Activated naive CD4-positive, alpha-beta T cell treated with anti-CD3 and anti-CD28 coated beads for 36 hours (primary cell): ENCODE measurements at regions of chr4 and their contacts with region 1.

Region 1: DNA sequence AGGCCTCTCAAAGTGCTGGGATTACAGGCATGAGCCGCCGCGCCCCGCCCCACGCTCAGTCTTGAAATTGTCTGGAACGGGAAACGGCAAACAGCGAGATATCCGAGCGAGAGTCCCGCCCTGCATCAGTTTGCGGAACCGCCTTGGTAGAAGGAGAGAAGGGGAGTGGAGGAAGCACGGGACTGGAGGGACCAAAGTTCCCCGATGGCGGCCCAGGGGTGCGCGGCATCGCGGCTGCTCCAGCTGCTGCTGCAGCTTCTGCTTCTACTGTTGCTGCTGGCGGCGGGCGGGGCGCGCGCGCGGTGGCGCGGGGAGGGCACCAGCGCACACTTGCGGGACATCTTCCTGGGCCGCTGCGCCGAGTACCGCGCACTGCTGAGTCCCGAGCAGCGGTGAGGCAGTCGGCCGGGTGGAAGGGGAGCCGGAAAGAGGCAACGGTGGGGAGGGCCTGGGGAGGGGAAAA is at the start of gene BST1:
- DNase-seq: peak; percentile 80
- H3K4me3 Mint-ChIP-seq: peak within 1 kb of the TSS; percentile 82
- H3K27ac Mint-ChIP-seq: no peak within 1 kb of the TSS
- H3K4me1 Mint-ChIP-seq: peaks cover 12% of the 10 kb centered on the region
- H3K27me3 Mint-ChIP-seq: peaks cover 15% of the 10 kb centered on the region
- total RNA-seq, gene BST1: 0.74 to 0.96 TPM

Region 2: DNA sequence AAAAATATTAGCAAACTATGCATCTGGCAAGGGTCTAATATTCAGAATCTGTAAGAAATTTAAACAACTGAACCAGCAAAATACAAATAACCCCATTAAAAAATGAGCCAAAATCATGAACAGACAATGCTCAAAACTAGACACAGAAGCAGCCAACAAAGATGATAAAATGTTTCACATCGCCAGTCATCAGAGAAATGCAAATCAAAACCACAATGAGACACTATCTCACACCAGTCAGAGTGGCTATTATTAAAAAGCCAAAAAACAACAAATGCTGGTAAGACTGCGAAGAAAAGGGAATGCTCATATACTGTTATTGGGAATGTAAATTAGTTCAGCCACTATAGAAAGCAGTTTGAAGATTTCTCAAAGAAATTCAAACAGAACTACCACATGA is 902.0 kb before region 1 on chr4:
- CTCF ChIA-PET with region 1: no interaction called
- intact Hi-C with region 1: no loop called
- DNase-seq: no peak
- H3K4me3 Mint-ChIP-seq: no peak overlapping the region
- H3K27ac Mint-ChIP-seq: no peak overlapping the region
- H3K4me1 Mint-ChIP-seq: no peaks in the 10 kb centered on the region
- H3K27me3 Mint-ChIP-seq: peaks cover 26% of the 10 kb centered on the region

Region 3: GRCh38 chr4:15681207-15682015 is 21.6 kb before region 1 on chr4 and contains the start of gene FAM200B:
- CTCF ChIA-PET with region 1: no interaction called
- intact Hi-C with region 1: loop called (anchors 1 kb)
- DNase-seq: peak; percentile 99
- H3K4me3 Mint-ChIP-seq: peak within 1 kb of the TSS; percentile 90
- H3K27ac Mint-ChIP-seq: peak within 1 kb of the TSS; percentile 89
- H3K4me1 Mint-ChIP-seq: peaks cover 39% of the 10 kb centered on the region
- H3K27me3 Mint-ChIP-seq: peaks cover 3% of the 10 kb centered on the region
- total RNA-seq, gene FAM200B: 8.0 to 9.1 TPM

Region 4: GRCh38 chr4:15719506-15719905 is 16.5 kb after region 1 on chr4:
- CTCF ChIA-PET with region 1: no interaction called
- intact Hi-C with region 1: no loop called
- DNase-seq: no peak
- H3K4me3 Mint-ChIP-seq: no peak overlapping the region
- H3K27ac Mint-ChIP-seq: no peak overlapping the region
- H3K4me1 Mint-ChIP-seq: no peaks in the 10 kb centered on the region
- H3K27me3 Mint-ChIP-seq: no peaks in the 10 kb centered on the region

Region 5: DNA sequence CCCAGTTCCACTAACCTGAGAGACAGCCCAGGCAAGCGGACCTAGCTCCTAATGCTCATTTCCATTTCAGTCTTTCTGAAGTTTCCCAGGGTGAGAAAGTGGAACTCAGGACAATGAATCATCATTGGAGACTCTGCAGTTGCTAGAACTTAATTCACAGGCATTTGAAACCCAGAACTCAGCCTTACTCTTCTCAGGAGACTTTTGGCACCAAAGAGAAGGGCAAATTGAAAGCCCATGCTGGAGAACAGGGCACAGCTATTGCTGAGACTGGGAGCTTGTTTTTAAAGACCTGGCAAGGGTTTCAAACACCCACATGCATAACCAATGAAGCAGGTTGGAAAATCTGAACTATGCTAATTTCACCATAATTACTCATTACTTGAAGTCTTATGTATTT is 35.9 kb after region 1 on chr4:
- CTCF ChIA-PET with region 1: no interaction called
- intact Hi-C with region 1: no loop called
- DNase-seq: peak; percentile 25
- H3K4me3 Mint-ChIP-seq: no peak overlapping the region
- H3K27ac Mint-ChIP-seq: no peak overlapping the region
- H3K4me1 Mint-ChIP-seq: peaks cover 44% of the 10 kb centered on the region
- H3K27me3 Mint-ChIP-seq: no peaks in the 10 kb centered on the region

Region 6: DNA sequence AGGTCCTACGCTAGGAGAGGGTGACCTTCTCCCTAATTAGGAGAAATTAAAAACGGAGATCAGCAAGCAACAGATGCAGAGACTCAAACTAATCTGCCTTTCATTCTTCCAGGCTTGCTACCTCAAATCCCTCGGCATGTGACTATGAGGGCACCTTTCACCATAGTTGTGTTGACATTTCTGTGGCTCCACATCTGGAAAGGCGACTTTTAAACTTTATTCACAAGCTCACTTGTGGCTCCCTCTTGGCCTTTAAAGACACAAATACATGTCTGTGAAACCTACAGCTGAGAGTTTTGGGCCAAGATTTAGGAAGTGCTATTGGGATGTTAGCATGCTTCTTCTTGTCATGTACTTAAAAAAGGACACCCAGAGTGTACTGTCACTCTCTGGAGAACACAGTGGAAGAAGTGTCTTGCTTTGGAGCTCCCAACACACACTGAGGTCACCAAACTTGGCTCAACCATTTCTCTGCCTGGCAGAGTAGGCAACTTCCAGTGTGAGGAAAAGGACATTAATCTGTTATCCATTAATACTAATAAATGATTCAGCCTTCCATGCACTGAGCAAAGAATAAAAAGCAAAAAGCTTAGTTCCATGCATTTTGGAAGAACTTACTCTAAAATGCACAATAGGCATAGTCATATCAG is 1135.4 kb after region 1 on chr4:
- CTCF ChIA-PET with region 1: no interaction called
- intact Hi-C with region 1: no loop called
- DNase-seq: no peak
- H3K4me3 Mint-ChIP-seq: no peak overlapping the region
- H3K27ac Mint-ChIP-seq: no peak overlapping the region
- H3K4me1 Mint-ChIP-seq: no peaks in the 10 kb centered on the region
- H3K27me3 Mint-ChIP-seq: peaks cover 3% of the 10 kb centered on the region